Naive thymus-derived CD4-positive, alpha-beta T cell (primary cell): ENCODE measurements at regions of chr9 and their contacts with region 1.

Region 1: GRCh38 chr9:3240656-3241268 is 285.0 kb downstream of the RFX3 start:
- DNase-seq: peak; percentile 23 to 58 (median 51)
- ATAC-seq: peak; percentile 89
- H3K4me3 ChIP-seq: no peak overlapping the region
- H3K4me3 Mint-ChIP-seq: no peak overlapping the region
- H3K27ac ChIP-seq: no peak overlapping the region
- H3K27ac Mint-ChIP-seq: no peak overlapping the region
- H3K4me1 ChIP-seq: no peaks in the 10 kb centered on the region
- H3K4me1 Mint-ChIP-seq: peaks cover 0 to 9% (median 0%) of the 10 kb centered on the region in 7 donors
- H3K27me3 ChIP-seq: no peaks in the 10 kb centered on the region
- H3K27me3 Mint-ChIP-seq: no peaks in the 10 kb centered on the region

Region 2: DNA sequence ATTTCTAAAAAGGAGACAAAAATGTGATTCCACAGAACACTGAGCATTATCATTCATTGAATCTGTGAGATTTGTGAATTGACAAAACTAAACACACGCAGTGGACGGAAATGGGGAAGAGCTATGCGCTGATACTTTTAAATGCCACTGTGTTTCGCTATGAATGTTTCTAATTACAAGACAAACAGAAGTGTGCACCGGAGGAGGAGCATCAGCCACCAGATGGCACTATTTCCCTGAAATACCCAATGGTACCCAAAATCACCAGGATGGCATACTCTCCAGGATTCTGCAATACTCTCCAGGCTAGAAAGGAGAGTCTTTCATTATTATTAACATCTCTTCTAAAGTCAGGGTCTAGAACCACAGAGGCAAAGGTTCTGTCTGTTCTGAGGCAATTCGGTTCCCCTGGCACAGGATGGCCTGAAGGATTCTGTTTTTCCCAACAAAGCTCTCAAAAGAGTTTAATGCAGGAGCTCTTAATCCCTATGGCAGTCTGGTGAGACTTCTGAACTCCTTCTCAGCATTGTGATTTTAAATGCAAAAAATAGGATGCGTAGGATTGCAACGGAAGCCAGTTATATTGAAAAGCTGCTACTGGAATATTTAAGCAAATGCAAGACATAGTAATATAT is 383.1 kb before region 1 on chr9:
- CTCF ChIA-PET with region 1: no interaction called
- POLR2A ChIA-PET with region 1: no interaction called
- intact Hi-C with region 1: loop called in 1 of 2 experiments (anchors 1 kb)
- DNase-seq: peak in 8 of 9 donors; percentile 20 to 58 (median 48)
- ATAC-seq: peak; percentile 91
- H3K4me3 ChIP-seq: no peak overlapping the region
- H3K4me3 Mint-ChIP-seq: no peak overlapping the region
- H3K27ac ChIP-seq: no peak overlapping the region
- H3K27ac Mint-ChIP-seq: no peak overlapping the region
- H3K4me1 ChIP-seq: no peaks in the 10 kb centered on the region
- H3K4me1 Mint-ChIP-seq: peaks cover 0 to 9% (median 3%) of the 10 kb centered on the region in 7 donors
- H3K27me3 ChIP-seq: no peaks in the 10 kb centered on the region
- H3K27me3 Mint-ChIP-seq: peaks cover 23 to 42% (median 32%) of the 10 kb centered on the region in 5 donors

Region 3: DNA sequence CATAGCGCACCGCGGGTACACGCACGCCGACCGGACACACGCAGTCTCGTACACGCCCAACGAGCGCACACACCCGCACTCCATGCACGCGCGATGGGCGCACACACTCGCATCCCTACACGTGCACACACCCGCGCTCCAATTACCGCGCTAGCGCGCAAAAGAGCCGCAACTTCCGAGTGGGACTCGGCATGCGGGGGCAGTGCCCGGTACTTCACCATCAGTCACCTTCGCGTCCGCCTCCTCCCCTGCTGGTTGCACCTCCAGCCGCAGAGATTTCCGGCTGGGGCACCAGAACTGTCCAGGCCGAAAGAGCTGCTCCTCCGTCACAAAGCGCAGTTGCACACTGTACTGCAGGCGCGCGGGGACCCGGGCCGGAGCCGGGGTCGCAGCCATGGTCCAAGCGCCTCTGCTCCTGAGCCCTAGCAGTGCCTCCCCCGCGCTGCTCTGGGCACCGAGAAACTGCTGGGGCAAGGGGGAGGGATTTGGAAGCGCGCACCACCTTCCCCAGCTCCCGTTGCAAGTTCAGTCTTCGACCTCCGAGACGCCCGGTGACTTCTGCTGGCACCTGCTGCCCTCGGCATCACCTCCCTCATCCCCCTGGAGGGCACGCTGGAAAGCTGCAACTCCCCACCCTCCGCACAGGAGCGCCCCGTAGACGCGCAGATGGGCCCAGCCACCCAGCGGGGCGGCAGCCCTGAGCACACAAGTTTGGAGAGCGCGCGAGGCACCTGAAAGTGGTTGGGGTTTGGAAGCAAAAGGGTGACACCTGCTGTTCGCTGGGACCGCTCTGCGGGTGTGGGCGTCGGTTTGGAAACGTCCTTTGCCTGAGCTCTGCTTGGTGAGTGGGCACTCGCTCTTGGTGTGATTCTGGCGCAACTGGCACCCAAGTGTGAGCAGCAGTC is 59.5 kb before region 1 on chr9:
- CTCF ChIA-PET with region 1: no interaction called
- POLR2A ChIA-PET with region 1: no interaction called
- intact Hi-C with region 1: no loop called
- DNase-seq: peak; percentile 4 to 50 (median 18)
- ATAC-seq: peak; percentile 51
- H3K4me3 ChIP-seq: no peak overlapping the region
- H3K4me3 Mint-ChIP-seq: peak overlapping the region; percentile 14 to 73 (median 45)
- H3K27ac ChIP-seq: no peak overlapping the region
- H3K27ac Mint-ChIP-seq: no peak overlapping the region
- H3K4me1 ChIP-seq: no peaks in the 10 kb centered on the region
- H3K4me1 Mint-ChIP-seq: peaks cover 0 to 18% (median 2%) of the 10 kb centered on the region in 7 donors
- H3K27me3 ChIP-seq: no peaks in the 10 kb centered on the region
- H3K27me3 Mint-ChIP-seq: peaks cover 36 to 51% (median 50%) of the 10 kb centered on the region in 5 donors

Region 4: GRCh38 chr9:3441197-3441816 is 200.5 kb after region 1 on chr9:
- CTCF ChIA-PET with region 1: interaction called, 8 read pairs
- POLR2A ChIA-PET with region 1: no interaction called
- intact Hi-C with region 1: loop called (anchors 1 kb)
- DNase-seq: peak in 8 of 9 donors; percentile 8 to 55 (median 39)
- ATAC-seq: peak; percentile 90
- H3K4me3 ChIP-seq: no peak overlapping the region
- H3K4me3 Mint-ChIP-seq: no peak overlapping the region
- H3K27ac ChIP-seq: no peak overlapping the region
- H3K27ac Mint-ChIP-seq: peak overlapping the region in 1 of 9 donors; percentile 49
- H3K4me1 ChIP-seq: no peaks in the 10 kb centered on the region
- H3K4me1 Mint-ChIP-seq: peaks cover 3 to 16% (median 11%) of the 10 kb centered on the region in 7 donors
- H3K27me3 ChIP-seq: no peaks in the 10 kb centered on the region
- H3K27me3 Mint-ChIP-seq: no peaks in the 10 kb centered on the region

Region 5: GRCh38 chr9:3480353-3480655 is 239.5 kb after region 1 on chr9:
- CTCF ChIA-PET with region 1: no interaction called
- POLR2A ChIA-PET with region 1: no interaction called
- intact Hi-C with region 1: no loop called
- DNase-seq: no peak
- ATAC-seq: no peak
- H3K4me3 ChIP-seq: no peak overlapping the region
- H3K4me3 Mint-ChIP-seq: no peak overlapping the region
- H3K27ac ChIP-seq: peak overlapping the region; percentile 8
- H3K27ac Mint-ChIP-seq: peak overlapping the region; percentile 4 to 96 (median 67)
- H3K4me1 ChIP-seq: peaks cover 7 to 22% of the 10 kb centered on the region in 2 donors
- H3K4me1 Mint-ChIP-seq: peaks cover 24 to 51% (median 47%) of the 10 kb centered on the region in 7 donors
- H3K27me3 ChIP-seq: no peaks in the 10 kb centered on the region
- H3K27me3 Mint-ChIP-seq: no peaks in the 10 kb centered on the region

Region 6: DNA sequence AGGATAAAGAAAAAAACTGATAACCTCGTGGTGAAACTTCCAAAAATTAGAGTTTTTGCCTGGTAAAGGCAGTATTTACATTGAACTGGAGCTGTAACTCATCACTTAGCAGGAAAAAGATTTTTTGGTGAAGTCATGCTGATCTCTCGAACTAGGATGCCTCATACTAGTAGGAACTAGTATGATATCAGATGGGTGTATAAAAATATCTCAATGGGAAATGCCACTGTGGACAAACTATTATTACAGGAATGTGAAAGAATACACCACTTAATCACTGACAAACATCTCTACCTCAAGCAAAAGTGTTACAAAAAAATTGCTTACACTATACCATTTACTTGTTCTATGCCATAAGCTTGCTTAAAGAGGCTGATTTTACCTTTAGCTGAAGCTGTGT is 256.6 kb after region 1 on chr9:
- CTCF ChIA-PET with region 1: no interaction called
- POLR2A ChIA-PET with region 1: no interaction called
- intact Hi-C with region 1: no loop called
- DNase-seq: no peak
- ATAC-seq: no peak
- H3K4me3 ChIP-seq: no peak overlapping the region
- H3K4me3 Mint-ChIP-seq: no peak overlapping the region
- H3K27ac ChIP-seq: no peak overlapping the region
- H3K27ac Mint-ChIP-seq: peak overlapping the region in 1 of 9 donors; percentile 63
- H3K4me1 ChIP-seq: no peaks in the 10 kb centered on the region
- H3K4me1 Mint-ChIP-seq: peaks cover 4 to 40% (median 26%) of the 10 kb centered on the region in 7 donors
- H3K27me3 ChIP-seq: no peaks in the 10 kb centered on the region
- H3K27me3 Mint-ChIP-seq: no peaks in the 10 kb centered on the region

Region 7: GRCh38 chr9:3732077-3733038 is 491.6 kb after region 1 on chr9:
- CTCF ChIA-PET with region 1: no interaction called
- POLR2A ChIA-PET with region 1: no interaction called
- intact Hi-C with region 1: loop called in 1 of 2 experiments (anchors 2 kb)
- DNase-seq: peak in 7 of 9 donors; percentile 12 to 60 (median 41)
- ATAC-seq: peak; percentile 89
- H3K4me3 ChIP-seq: no peak overlapping the region
- H3K4me3 Mint-ChIP-seq: peak overlapping the region in 5 of 10 donors; percentile 9 to 53 (median 35)
- H3K27ac ChIP-seq: no peak overlapping the region
- H3K27ac Mint-ChIP-seq: peak overlapping the region in 1 of 9 donors; percentile 39
- H3K4me1 ChIP-seq: no peaks in the 10 kb centered on the region
- H3K4me1 Mint-ChIP-seq: peaks cover 0 to 18% (median 5%) of the 10 kb centered on the region in 7 donors
- H3K27me3 ChIP-seq: no peaks in the 10 kb centered on the region
- H3K27me3 Mint-ChIP-seq: no peaks in the 10 kb centered on the region

Region 8: GRCh38 chr9:4228606-4229005 is 987.8 kb after region 1 on chr9:
- CTCF ChIA-PET with region 1: no interaction called
- POLR2A ChIA-PET with region 1: no interaction called
- intact Hi-C with region 1: loop called in 1 of 2 experiments (anchors 2 kb)
- DNase-seq: peak in 1 of 9 donors; percentile 16
- ATAC-seq: peak; percentile 22
- H3K4me3 ChIP-seq: no peak overlapping the region
- H3K4me3 Mint-ChIP-seq: no peak overlapping the region
- H3K27ac ChIP-seq: no peak overlapping the region
- H3K27ac Mint-ChIP-seq: no peak overlapping the region
- H3K4me1 ChIP-seq: no peaks in the 10 kb centered on the region
- H3K4me1 Mint-ChIP-seq: peaks cover 0 to 28% (median 4%) of the 10 kb centered on the region in 7 donors
- H3K27me3 ChIP-seq: no peaks in the 10 kb centered on the region
- H3K27me3 Mint-ChIP-seq: peaks cover 0 to 10% (median 2%) of the 10 kb centered on the region in 5 donors

Region 9: DNA sequence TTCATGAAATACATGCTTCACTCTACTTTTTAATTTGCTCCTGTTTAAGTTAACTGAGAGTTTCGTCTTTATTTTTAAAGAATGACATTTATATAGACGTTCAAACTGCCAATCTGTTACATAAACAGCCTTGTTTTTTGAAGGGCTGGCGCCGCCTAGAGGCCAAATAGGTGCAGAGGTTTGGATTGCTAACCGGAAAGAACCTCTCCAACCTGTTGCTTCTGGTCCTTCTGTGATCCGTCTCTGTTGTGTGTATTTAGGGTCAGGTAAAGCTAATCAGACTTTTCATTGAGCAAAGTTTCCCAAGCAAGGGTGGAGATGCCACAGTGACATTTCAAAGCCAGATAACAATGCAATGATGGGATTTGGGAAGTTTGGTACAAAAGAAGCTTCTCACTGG is 1098.6 kb after region 1 on chr9:
- CTCF ChIA-PET with region 1: no interaction called
- POLR2A ChIA-PET with region 1: no interaction called
- intact Hi-C with region 1: loop called (anchors 1 to 2 kb)
- DNase-seq: peak; percentile 62 to 84 (median 77)
- ATAC-seq: peak; percentile 90
- H3K4me3 ChIP-seq: no peak overlapping the region
- H3K4me3 Mint-ChIP-seq: peak overlapping the region in 9 of 10 donors; percentile 10 to 70 (median 48)
- H3K27ac ChIP-seq: no peak overlapping the region
- H3K27ac Mint-ChIP-seq: peak overlapping the region; percentile 16 to 92 (median 44)
- H3K4me1 ChIP-seq: no peaks in the 10 kb centered on the region
- H3K4me1 Mint-ChIP-seq: peaks cover 3 to 8% (median 7%) of the 10 kb centered on the region in 7 donors
- H3K27me3 ChIP-seq: no peaks in the 10 kb centered on the region
- H3K27me3 Mint-ChIP-seq: peaks cover 0 to 2% (median 0%) of the 10 kb centered on the region in 5 donors

Region 10: DNA sequence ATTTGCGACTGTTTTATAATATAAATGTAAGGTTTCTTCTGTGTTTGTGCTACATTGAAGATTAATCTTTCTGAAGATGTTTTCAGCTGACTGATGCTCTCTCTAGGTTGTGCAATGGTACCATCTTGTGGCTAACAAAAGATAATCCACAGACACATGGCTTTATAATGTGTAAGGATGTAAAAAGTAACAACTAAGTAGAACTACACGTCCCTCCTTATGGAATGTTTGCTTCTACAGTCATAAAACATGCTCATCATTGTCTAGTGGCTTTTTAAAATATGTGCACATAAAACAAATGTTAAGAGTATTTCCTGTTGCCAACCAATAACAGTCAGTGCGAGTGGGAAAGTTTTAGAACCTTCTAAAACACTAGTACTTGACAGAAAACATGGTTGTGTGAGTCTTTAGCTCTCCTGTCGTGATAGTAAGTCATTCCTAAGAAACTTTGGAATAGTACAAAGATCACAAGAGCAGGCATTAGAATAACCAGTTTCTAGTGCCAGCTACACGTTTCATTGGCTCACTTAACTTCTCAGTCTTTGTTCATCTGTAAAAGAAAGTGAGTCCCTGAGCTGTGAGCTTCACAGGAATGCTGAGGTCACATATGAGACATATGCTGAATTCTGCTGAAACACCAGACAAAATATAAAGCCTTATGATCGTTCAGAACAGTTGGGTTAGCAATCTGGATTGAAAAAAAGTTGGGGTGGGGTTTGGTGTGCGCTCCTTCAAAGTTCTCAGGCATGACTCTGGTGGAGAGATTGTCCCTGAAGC is 1134.8 kb after region 1 on chr9:
- CTCF ChIA-PET with region 1: no interaction called
- POLR2A ChIA-PET with region 1: no interaction called
- intact Hi-C with region 1: loop called in 1 of 2 experiments (anchors 1 kb)
- DNase-seq: peak in 4 of 9 donors; percentile 24 to 32 (median 30)
- ATAC-seq: peak; percentile 55
- H3K4me3 ChIP-seq: no peak overlapping the region
- H3K4me3 Mint-ChIP-seq: no peak overlapping the region
- H3K27ac ChIP-seq: no peak overlapping the region
- H3K27ac Mint-ChIP-seq: peak overlapping the region in 1 of 9 donors; percentile 55
- H3K4me1 ChIP-seq: no peaks in the 10 kb centered on the region
- H3K4me1 Mint-ChIP-seq: no peaks in the 10 kb centered on the region
- H3K27me3 ChIP-seq: peaks cover 0 to 4% of the 10 kb centered on the region in 2 donors
- H3K27me3 Mint-ChIP-seq: peaks cover 0 to 22% (median 11%) of the 10 kb centered on the region in 5 donors